Activated CD4-positive, alpha-beta memory T cell treated with anti-CD3 and anti-CD28 coated beads, Interleukin-2, amount 10 ng/mL, durations not matched to agents 7 days and 5 days (primary cell): ENCODE measurements at regions of chr10 and their contacts with region 1.

Region 1: GRCh38 chr10:14837757-14838581 is at the starts of genes CDNF, HSPA14 and MSANTD7:
- DNase-seq: peak; percentile 99
- H3K4me3 Mint-ChIP-seq: peak within 1 kb of the TSS; percentile 88
- H3K27ac Mint-ChIP-seq: peak within 1 kb of the TSS; percentile 82
- H3K4me1 Mint-ChIP-seq: peaks cover 24% of the 10 kb centered on the region
- H3K27me3 Mint-ChIP-seq: no peaks in the 10 kb centered on the region
- total RNA-seq, gene CDNF: 0.63 to 0.75 TPM
- total RNA-seq, gene HSPA14: 21.9 to 23.1 TPM
- total RNA-seq, gene MSANTD7: 15.5 to 18.7 TPM

Region 2: DNA sequence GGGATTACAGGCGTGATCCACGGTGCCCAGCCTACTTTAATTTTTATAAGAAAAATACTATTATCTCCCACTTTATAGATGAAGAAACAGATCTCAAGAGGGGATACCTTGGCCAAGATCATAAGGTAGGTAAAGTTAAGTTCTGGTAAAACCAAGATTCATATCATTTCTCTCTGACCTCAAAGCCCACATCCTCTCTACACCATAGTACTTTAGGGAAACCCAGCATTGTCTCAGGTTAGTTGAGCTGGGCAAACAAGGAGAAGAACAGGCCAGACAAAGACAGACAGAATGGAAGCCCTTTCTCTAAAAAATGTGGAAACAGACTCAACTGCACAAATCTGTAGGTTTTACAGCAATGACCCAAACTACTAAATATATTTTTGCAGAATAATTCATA is 309.5 kb before region 1 on chr10:
- CTCF ChIA-PET with region 1: no interaction called
- POLR2A ChIA-PET with region 1: interaction called, 13 read pairs
- DNase-seq: no peak
- H3K4me3 Mint-ChIP-seq: peak overlapping the region; percentile 4
- H3K27ac Mint-ChIP-seq: peak overlapping the region; percentile 34
- H3K4me1 Mint-ChIP-seq: peaks cover 87% of the 10 kb centered on the region
- H3K27me3 Mint-ChIP-seq: no peaks in the 10 kb centered on the region

Region 3: DNA sequence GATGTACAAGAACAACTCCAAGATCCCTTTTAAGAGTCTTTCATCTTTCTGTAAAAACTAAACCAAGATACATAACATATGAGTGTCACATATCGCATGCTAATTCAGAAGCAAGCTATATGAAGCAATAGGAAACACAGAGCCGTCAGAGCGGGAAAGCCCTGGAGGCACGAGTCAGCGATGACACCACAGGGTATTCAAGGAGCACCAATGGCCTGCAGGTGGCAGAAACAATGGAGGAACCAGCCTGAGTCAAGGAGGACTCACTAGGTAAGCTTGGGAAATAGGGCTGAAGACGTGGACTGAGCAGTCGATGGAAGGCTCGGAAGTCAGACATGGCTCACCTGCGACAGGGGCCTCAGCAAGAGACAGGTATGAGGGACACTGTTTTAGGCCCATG is 277.7 kb before region 1 on chr10:
- CTCF ChIA-PET with region 1: no interaction called
- POLR2A ChIA-PET with region 1: interaction called, 11 read pairs
- DNase-seq: peak; percentile 81
- H3K4me3 Mint-ChIP-seq: peak overlapping the region; percentile 46
- H3K27ac Mint-ChIP-seq: peak overlapping the region; percentile 95
- H3K4me1 Mint-ChIP-seq: peaks cover 91% of the 10 kb centered on the region
- H3K27me3 Mint-ChIP-seq: no peaks in the 10 kb centered on the region

Region 4: GRCh38 chr10:14588084-14588937 is 249.7 kb before region 1 on chr10:
- CTCF ChIA-PET with region 1: interaction called, 6 read pairs
- POLR2A ChIA-PET with region 1: interaction called, 17 read pairs
- DNase-seq: peak; percentile 66
- H3K4me3 Mint-ChIP-seq: peak overlapping the region; percentile 47
- H3K27ac Mint-ChIP-seq: peak overlapping the region; percentile 96
- H3K4me1 Mint-ChIP-seq: peaks cover 93% of the 10 kb centered on the region
- H3K27me3 Mint-ChIP-seq: no peaks in the 10 kb centered on the region

Region 5: DNA sequence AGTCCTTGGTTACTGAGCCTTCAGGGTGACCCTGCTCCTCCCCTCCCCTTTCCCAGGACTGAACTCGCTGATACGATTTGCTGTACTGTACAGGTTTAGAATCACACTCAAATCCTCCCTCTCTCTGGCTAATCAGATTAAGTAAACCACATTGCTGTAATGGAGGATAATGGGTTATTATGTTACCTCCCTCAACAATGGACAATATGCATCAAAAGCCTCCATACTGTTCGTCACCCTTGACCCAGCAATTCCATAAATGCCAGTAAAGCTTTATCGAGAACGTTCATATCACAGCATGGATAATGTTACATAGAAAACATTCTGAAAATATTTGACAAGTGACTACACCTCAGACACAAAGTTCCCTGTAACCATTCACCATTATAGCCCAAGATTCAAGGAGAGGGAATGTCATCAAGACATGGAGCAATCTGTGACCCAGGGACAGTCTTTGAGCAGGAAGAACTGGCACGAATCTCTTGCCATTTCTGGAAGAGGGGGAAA is 124.9 kb before region 1 on chr10:
- CTCF ChIA-PET with region 1: no interaction called
- POLR2A ChIA-PET with region 1: no interaction called
- DNase-seq: no peak
- H3K4me3 Mint-ChIP-seq: no peak overlapping the region
- H3K27ac Mint-ChIP-seq: no peak overlapping the region
- H3K4me1 Mint-ChIP-seq: no peaks in the 10 kb centered on the region
- H3K27me3 Mint-ChIP-seq: no peaks in the 10 kb centered on the region

Region 6: GRCh38 chr10:14822879-14823755 is 14.9 kb before region 1 on chr10:
- CTCF ChIA-PET with region 1: interaction called, 15 read pairs
- POLR2A ChIA-PET with region 1: interaction called, 6 read pairs
- DNase-seq: peak; percentile 38
- H3K4me3 Mint-ChIP-seq: no peak overlapping the region
- H3K27ac Mint-ChIP-seq: no peak overlapping the region
- H3K4me1 Mint-ChIP-seq: peaks cover 9% of the 10 kb centered on the region
- H3K27me3 Mint-ChIP-seq: peaks cover 5% of the 10 kb centered on the region

Region 7: DNA sequence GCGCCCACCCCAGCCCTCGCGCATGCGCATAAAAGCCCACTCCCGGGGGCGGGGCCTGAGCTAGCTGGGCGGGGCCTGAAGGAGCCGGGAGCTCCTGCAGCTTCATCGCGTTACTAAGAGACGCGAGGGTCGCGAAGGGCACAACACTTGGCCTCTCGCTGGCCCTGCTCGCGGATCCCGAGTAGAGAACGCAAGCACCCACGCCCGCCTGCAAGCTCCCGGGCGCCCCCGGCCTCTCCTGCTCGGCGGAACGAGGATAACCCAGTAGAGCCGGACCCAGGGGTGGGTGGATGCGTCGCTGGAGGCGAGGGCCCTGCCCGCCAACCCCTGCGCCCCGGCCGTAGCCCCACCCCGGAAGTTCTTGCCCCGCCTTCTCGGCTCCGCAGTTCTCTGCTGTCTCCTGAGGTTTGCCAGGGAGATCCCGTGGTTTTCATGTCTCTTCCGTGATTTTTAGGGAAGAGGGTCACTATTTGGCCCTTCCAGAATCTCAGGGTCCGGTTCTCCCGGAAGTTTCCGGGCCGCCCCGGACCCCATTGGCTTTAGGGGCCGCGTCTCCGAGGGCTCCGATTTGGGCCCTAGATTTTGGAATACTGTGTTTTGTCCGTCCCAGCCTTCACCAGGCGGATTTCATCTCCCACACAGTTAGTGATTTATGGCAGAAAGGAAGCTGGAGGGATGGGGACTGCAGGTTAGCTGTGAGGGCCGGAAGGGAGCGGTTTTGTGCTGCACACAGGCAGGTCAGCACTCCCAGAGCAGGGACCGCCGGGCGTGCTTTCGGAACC is 121.5 kb after region 1 on chr10 and contains the start of gene MEIG1:
- CTCF ChIA-PET with region 1: interaction called, 3 read pairs
- POLR2A ChIA-PET with region 1: interaction called, 33 read pairs
- DNase-seq: peak; percentile 92
- H3K4me3 Mint-ChIP-seq: peak within 1 kb of the TSS; percentile 88
- H3K27ac Mint-ChIP-seq: peak within 1 kb of the TSS; percentile 96
- H3K4me1 Mint-ChIP-seq: peaks cover 42% of the 10 kb centered on the region
- H3K27me3 Mint-ChIP-seq: no peaks in the 10 kb centered on the region
- total RNA-seq, gene MEIG1: 0.75 to 1.3 TPM